ENCODE measurements at regions of chr11 and their contacts with region 1.

Region 1: GRCh38 chr11:83033972-83034672 is 37.6 kb downstream of the RAB30 start:
- DNase-seq: peak; percentile 80
- H3K4me3 ChIP-seq: peak overlapping the region; percentile 24
- H3K27me3 ChIP-seq: no peaks in the 10 kb centered on the region
- CTCF ChIP-seq: no peak

Region 2: GRCh38 chr11:82932564-82932963 is 101.6 kb before region 1 on chr11:
- CTCF ChIA-PET with region 1: no interaction called
- POLR2A ChIA-PET with region 1: no interaction called
- DNase-seq: no peak
- H3K4me3 ChIP-seq: no peak overlapping the region
- H3K27me3 ChIP-seq: no peaks in the 10 kb centered on the region
- CTCF ChIP-seq: no peak

Region 3: DNA sequence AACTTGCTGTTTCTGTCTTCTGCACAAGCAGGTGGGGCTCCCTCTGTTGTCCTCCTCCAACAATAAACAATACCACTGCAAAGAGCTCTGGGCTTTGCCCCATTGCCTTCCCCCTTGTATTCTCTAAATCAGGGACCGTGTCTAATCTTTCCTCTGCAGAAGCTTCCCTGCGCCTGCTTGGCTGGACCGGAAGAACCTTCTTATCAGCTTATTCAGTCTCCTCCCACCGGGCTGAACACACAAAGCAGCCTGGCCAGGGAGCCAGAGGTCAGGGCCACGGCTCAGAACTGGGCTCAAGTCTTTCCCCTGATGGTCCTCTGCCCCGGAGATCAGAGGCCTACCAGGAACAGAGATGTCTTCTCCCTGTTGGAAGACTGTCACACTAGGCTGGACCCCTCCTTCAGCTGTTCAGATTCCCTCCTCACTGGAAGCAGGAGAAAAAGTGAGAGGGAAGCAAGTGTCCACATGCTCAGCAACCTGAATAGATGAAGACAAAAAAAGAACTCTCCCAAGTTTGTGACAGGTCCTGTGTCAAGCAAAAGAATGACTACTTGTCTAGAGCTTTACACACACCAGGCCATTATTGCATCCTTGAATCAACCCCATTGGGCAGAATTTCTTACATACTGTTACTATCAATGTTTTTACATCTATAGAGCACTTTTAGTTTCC is 26.1 kb before region 1 on chr11:
- CTCF ChIA-PET with region 1: interaction called, 5 read pairs
- POLR2A ChIA-PET with region 1: interaction called, 12 read pairs
- DNase-seq: no peak
- H3K4me3 ChIP-seq: no peak overlapping the region
- H3K27me3 ChIP-seq: no peaks in the 10 kb centered on the region
- CTCF ChIP-seq: no peak

Region 4: GRCh38 chr11:83051760-83052671 is 17.9 kb after region 1 on chr11:
- CTCF ChIA-PET with region 1: interaction called, 14 read pairs
- POLR2A ChIA-PET with region 1: no interaction called
- DNase-seq: peak; percentile 97
- H3K4me3 ChIP-seq: no peak overlapping the region
- H3K27me3 ChIP-seq: no peaks in the 10 kb centered on the region
- CTCF ChIP-seq: no peak

Region 5: GRCh38 chr11:83071567-83072349 is 37.6 kb after region 1 on chr11 and contains the start of gene RAB30:
- CTCF ChIA-PET with region 1: no interaction called
- POLR2A ChIA-PET with region 1: interaction called, 11 read pairs
- DNase-seq: peak; percentile 99
- H3K4me3 ChIP-seq: peak within 1 kb of the TSS; percentile 79
- H3K27me3 ChIP-seq: no peaks in the 10 kb centered on the region
- CTCF ChIP-seq: no peak
- polyA plus RNA-seq, gene RAB30: 14.0 and 15.9 TPM in 2 replicates

Measured in BJ (cell line).